Naive thymus-derived CD8-positive, alpha-beta T cell (primary cell): ENCODE measurements at regions of chr14 and their contacts with region 1.

Region 1: GRCh38 chr14:99192028-99192621 is 79.9 kb downstream of the BCL11B start:
- DNase-seq: peak in 3 of 10 donors; percentile 40 to 59 (median 46)
- ATAC-seq: peak; percentile 24 to 37
- H3K4me3 Mint-ChIP-seq: peak overlapping the region; percentile 79 to 98 (median 87)
- H3K27ac Mint-ChIP-seq: peak overlapping the region; percentile 93 to 99 (median 98)
- H3K4me1 Mint-ChIP-seq: peaks cover 51 to 97% (median 93%) of the 10 kb centered on the region in 4 donors
- H3K27me3 Mint-ChIP-seq: no peaks in the 10 kb centered on the region

Region 2: GRCh38 chr14:99156814-99157213 is 35.3 kb before region 1 on chr14:
- POLR2A ChIA-PET with region 1: no interaction called
- DNase-seq: no peak
- ATAC-seq: no peak
- H3K4me3 Mint-ChIP-seq: no peak overlapping the region
- H3K27ac Mint-ChIP-seq: no peak overlapping the region
- H3K4me1 Mint-ChIP-seq: peaks cover 15 to 36% (median 24%) of the 10 kb centered on the region in 4 donors
- H3K27me3 Mint-ChIP-seq: no peaks in the 10 kb centered on the region

Region 3: GRCh38 chr14:99177886-99178835 is 14.0 kb before region 1 on chr14:
- POLR2A ChIA-PET with region 1: interaction called, 2,798 read pairs
- DNase-seq: peak in 4 of 10 donors; percentile 0 to 37 (median 10)
- ATAC-seq: peak in 1 of 2 donors; percentile 1
- H3K4me3 Mint-ChIP-seq: peak overlapping the region; percentile 58 to 88 (median 72)
- H3K27ac Mint-ChIP-seq: peak overlapping the region; percentile 90 to 98 (median 94)
- H3K4me1 Mint-ChIP-seq: peaks cover 35 to 64% (median 59%) of the 10 kb centered on the region in 4 donors
- H3K27me3 Mint-ChIP-seq: no peaks in the 10 kb centered on the region

Region 4: GRCh38 chr14:99230208-99231151 is 38.4 kb after region 1 on chr14:
- POLR2A ChIA-PET with region 1: interaction called, 2,798 read pairs
- DNase-seq: peak; percentile 69 to 93 (median 88)
- ATAC-seq: peak; percentile 46 to 76
- H3K4me3 Mint-ChIP-seq: peak overlapping the region; percentile 71 to 94 (median 82)
- H3K27ac Mint-ChIP-seq: peak overlapping the region; percentile 97 to 100 (median 98)
- H3K4me1 Mint-ChIP-seq: peaks cover 65 to 97% (median 95%) of the 10 kb centered on the region in 4 donors
- H3K27me3 Mint-ChIP-seq: no peaks in the 10 kb centered on the region

Region 5: GRCh38 chr14:99282261-99283050 is 90.3 kb after region 1 on chr14:
- POLR2A ChIA-PET with region 1: no interaction called
- DNase-seq: no peak
- ATAC-seq: no peak
- H3K4me3 Mint-ChIP-seq: no peak overlapping the region
- H3K27ac Mint-ChIP-seq: peak overlapping the region in 1 of 10 donors; percentile 48
- H3K4me1 Mint-ChIP-seq: peaks cover 12 to 45% (median 24%) of the 10 kb centered on the region in 4 donors
- H3K27me3 Mint-ChIP-seq: peaks cover 0 to 13% (median 0%) of the 10 kb centered on the region in 5 donors

Region 6: DNA sequence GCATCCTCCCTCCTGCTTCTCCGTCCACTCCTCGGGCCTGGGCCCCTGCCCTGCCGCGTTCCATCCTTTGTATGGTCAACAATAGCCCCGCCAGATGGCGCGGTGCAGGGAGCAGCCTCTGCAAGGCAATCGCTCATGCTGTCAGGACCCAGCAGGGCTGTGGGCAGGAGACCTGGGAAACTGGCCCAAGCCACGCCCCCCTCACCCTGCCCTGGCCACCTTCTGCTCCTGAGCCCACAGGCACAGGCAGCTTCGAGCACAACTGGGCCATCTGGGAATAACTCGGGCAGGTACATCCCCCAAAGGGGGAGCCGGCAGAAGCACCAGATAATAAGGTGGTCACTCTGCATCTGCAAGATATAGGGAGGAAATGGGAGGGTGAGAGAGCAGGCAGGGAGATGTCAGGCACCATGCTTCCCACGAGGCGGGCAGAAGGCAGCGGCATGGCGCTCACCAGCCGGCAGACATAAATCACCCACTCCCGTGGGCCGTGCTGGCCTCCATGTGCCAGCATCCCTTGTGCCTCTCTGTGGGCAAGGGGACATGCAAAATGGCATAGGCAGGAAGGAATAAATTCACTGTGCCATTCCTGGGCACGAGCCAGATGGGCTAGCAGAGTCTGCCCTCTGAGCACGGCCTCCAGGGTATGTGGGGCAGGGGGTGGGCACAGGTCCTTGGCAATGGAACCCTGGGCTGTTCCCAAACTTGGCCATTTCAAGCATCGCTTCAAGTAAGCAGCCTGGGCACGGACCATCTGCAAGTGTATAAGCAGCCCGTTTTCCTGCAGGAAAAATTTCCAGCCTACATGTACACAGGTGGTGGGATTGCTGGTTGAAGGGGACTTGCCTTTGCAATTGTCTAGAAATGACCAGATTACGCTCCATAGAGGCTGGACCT is 371.4 kb after region 1 on chr14:
- POLR2A ChIA-PET with region 1: no interaction called
- DNase-seq: no peak
- ATAC-seq: no peak
- H3K4me3 Mint-ChIP-seq: no peak overlapping the region
- H3K27ac Mint-ChIP-seq: no peak overlapping the region
- H3K4me1 Mint-ChIP-seq: peaks cover 0 to 15% (median 7%) of the 10 kb centered on the region in 4 donors
- H3K27me3 Mint-ChIP-seq: peaks cover 0 to 2% (median 0%) of the 10 kb centered on the region in 5 donors